ENCODE measurements at regions of chr7 and their contacts with region 1.

Region 1: DNA sequence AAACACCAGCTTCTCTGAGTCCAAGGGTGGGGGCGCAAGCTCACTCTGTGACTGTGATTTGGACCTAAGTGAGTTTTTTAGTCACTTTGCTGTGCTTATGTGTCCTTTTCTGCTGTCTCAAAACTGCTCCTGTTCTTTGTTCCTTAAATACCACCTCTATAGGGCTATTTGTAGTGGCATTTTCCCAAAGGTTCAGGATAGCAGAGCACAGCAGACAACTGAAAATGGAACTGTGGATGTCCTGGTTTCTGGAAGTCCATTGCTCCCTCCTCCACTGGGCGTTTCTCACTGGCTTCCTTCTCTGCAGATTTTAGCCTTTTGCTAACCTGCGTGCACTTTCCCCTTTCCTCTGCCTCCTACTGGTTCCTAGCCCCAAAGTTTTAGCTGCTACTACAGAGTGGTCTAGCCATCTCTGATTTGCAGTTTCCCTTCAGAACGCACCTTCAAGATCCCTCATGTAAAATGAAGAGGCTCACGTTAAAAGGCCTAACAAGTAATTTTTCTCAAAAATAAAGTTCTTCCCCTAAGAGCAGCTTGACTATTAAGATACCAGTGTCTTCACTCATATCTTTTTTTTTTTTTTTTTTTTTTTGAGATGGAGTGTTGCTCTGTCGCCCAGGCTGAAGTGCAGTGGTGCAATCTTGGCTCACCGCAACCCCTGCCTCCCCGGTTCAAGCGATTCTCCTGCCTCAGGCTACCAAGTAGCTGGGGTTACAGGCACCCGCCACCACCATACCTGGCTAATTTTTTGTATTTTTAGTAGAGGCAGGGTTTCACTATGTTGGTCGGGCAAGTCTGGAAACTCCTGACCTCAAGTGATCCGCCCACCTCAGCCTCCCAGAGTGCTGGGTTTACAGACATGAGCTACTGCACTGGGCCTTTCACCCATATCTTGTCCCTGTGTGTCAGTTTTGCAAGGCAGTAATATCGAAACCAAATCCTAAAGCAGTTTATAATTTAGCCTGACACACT is 25.8 kb downstream of the BLVRA start:
- DNase-seq: peak; percentile 82
- ATAC-seq: peak; percentile 97
- H3K4me3 ChIP-seq: peak overlapping the region; percentile 47
- H3K27ac ChIP-seq: peak overlapping the region; percentile 56
- H3K4me1 ChIP-seq: peaks cover 16% of the 10 kb centered on the region
- H3K27me3 ChIP-seq: no peaks in the 10 kb centered on the region
- CTCF ChIP-seq: no peak; a peak in 1 of 6 replicates
- EP300 ChIP-seq: no peak
- POLR2A ChIP-seq: no peak
- RAD21 ChIP-seq: no peak

Region 2: DNA sequence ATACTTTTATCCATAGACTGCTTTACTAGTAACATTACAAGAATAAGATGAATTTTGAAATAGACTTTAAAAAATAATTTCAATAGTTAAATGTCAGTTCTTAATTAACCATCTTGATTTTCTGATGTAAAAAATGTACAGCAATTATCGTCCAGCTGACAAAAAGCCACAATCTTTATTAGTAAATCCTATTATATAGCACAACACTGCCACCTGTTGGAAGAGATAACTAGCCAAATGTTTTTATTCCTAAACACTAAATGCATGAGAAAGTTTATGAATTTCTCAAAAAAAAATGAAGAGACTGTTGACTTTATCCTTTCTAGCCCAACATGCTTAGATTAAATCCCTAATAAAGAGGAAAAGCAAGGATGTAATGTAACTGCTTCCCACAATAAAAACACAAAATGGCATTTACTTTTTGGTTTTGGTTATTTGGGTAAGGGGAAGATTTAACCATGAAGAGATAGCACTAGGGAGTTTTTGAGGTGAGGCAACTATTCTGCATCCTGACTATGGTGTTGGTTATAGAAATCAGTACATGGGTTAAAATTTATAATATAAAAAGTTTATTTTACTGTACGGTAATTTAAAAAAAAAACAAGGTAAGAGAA is 63.0 kb before region 1 on chr7:
- CTCF ChIA-PET with region 1: interaction called, 11 read pairs
- POLR2A ChIA-PET with region 1: no interaction called
- RAD21 ChIA-PET with region 1: interaction called, 5 read pairs
- SMC1A ChIA-PET with region 1: interaction called, 5 read pairs
- in situ Hi-C with region 1: no loop called
- intact Hi-C with region 1: no loop called
- DNase-seq: no peak
- ATAC-seq: peak; percentile 52
- H3K4me3 ChIP-seq: no peak overlapping the region
- H3K27ac ChIP-seq: no peak overlapping the region
- H3K4me1 ChIP-seq: no peaks in the 10 kb centered on the region
- H3K27me3 ChIP-seq: no peaks in the 10 kb centered on the region
- CTCF ChIP-seq: peak; percentile 40 to 64 (median 44); a peak in 5 of 6 replicates
- EP300 ChIP-seq: no peak
- POLR2A ChIP-seq: no peak
- RAD21 ChIP-seq: peak; percentile 68

Region 3: DNA sequence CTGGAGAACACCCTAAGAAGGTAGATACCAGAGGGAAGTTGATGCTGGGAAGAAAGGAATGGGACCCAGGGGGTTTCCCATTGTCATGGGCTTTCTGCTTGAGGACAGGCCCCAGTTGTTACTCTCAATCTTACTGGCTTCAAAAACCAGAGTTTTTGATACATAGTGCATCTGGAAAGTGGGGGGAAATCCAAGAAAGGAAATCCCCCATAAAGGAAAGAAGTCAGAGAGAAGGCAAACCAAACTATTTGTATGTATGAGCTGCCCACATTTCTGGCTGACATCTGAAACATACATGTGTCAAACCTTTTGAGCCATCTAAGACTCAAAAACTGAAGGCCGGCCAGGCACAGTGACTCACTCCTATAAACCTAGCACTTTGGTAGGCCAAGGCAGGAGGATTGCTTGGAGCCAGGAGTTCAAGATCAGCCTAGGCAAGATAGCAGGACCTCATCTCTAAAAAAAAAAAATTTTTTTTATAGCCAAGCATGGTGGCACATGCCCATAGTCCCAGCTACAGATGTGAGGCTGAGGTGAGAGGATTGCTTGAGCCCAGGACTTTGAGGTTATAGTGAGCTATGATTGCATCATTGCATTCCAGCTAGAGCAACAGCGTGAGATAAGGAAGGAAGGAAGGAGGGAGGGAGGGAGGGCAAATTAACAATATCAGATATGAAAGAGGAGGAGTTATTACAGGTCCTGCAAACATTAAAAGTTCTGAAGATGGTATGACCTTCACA is 48.3 kb before region 1 on chr7:
- CTCF ChIA-PET with region 1: interaction called, 6 read pairs
- POLR2A ChIA-PET with region 1: interaction called, 7 read pairs
- RAD21 ChIA-PET with region 1: interaction called, 25 read pairs
- SMC1A ChIA-PET with region 1: interaction called, 37 read pairs
- in situ Hi-C with region 1: no loop called
- intact Hi-C with region 1: no loop called
- DNase-seq: peak; percentile 90
- ATAC-seq: peak; percentile 90
- H3K4me3 ChIP-seq: no peak overlapping the region
- H3K27ac ChIP-seq: peak overlapping the region; percentile 58
- H3K4me1 ChIP-seq: peaks cover 31% of the 10 kb centered on the region
- H3K27me3 ChIP-seq: no peaks in the 10 kb centered on the region
- CTCF ChIP-seq: no peak
- EP300 ChIP-seq: peak; percentile 67 to 81; a peak in 3 of 4 replicates
- POLR2A ChIP-seq: no peak
- RAD21 ChIP-seq: 0 out of 2 replicates have a peak, but pooled peaks have one; percentile 1

Region 4: DNA sequence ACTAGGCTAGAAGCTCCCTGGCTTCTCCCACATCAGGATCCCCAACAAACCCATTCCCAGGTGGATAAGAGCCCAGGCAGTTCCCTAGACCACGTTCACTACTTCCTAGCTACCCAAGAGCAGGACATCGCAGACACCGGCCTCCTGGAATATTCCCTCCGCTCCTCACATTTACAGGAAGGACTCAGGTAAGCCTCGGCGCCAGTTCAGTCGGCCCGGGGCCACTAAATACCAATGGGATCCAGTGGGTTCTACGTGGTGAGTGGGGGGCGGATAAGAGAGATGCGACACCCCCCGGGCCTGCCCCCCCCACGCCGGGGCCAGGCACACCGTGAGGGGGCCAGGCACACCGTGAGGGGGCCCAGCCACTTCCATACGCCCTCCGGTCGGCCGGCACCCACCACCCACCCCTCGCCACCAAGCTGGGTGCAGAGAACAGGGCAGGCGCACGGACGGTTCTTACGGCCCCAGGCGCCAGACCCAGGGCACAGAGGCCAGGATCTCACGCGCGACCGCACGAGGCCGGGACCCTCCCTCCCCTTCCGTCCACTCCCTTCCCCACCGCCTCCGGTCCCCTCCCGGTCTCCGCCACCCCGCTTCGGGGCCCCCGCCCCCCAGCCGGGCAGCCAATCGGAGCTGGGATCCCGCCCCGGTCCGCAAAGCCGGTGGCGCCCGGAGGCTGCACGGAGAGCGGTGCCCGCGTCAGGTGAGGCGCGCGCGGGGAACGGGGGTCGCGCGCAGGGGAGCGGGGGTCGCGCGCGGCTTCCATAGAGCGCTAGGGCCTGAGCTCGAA is 26.1 kb before region 1 on chr7 and contains the start of gene BLVRA:
- CTCF ChIA-PET with region 1: interaction called, 36 read pairs
- POLR2A ChIA-PET with region 1: interaction called, 8 read pairs
- RAD21 ChIA-PET with region 1: interaction called, 40 read pairs
- SMC1A ChIA-PET with region 1: interaction called, 29 read pairs
- in situ Hi-C with region 1: no loop called
- intact Hi-C with region 1: no loop called
- DNase-seq: no peak
- ATAC-seq: peak; percentile 82
- H3K4me3 ChIP-seq: peak within 1 kb of the TSS; percentile 87
- H3K27ac ChIP-seq: peak within 1 kb of the TSS; percentile 73
- H3K4me1 ChIP-seq: peaks cover 38% of the 10 kb centered on the region
- H3K27me3 ChIP-seq: no peaks in the 10 kb centered on the region
- CTCF ChIP-seq: no peak
- EP300 ChIP-seq: no peak
- POLR2A ChIP-seq: peak; percentile 70
- RAD21 ChIP-seq: no peak
- polyA plus RNA-seq, gene BLVRA: 187 to 198 TPM

Region 5: DNA sequence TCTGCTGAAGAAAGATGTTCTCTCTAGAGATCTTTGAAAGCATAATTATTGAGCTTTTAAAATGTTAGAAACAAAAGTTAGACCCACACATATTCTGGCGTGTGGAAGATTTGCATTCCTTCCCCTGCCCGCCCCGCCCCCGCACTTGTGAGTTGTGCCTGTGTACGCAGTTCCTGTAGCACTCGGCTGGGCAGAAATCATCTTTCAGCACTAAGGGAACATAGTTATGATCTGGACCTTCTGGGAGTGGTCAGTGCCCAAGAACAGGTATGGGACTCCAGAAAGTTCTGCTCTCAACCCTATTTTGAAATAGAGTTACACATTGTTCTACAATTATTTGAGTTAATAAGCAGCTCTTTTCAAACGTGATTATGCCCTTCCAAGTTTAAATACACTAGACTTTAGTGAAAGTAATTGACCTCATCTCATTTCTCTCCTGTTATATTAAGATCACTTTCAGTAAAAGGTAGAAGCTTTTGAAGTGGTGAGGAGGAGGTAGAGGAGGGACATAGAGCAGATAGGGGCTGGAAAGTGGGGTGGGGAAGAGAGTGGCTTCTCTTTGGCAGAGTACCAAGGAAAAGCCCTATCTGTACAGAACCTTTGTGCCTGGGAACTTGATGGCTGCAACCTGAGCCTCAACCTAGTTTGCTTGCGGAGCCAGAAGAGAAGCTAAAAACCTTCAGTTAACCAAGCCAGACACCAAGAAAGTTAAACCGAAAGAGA is 20.1 kb before region 1 on chr7:
- CTCF ChIA-PET with region 1: interaction called, 36 read pairs
- POLR2A ChIA-PET with region 1: interaction called, 12 read pairs
- RAD21 ChIA-PET with region 1: interaction called, 40 read pairs
- SMC1A ChIA-PET with region 1: interaction called, 29 read pairs
- in situ Hi-C with region 1: no loop called
- intact Hi-C with region 1: no loop called
- DNase-seq: no peak
- ATAC-seq: peak; percentile 86
- H3K4me3 ChIP-seq: peak overlapping the region; percentile 77
- H3K27ac ChIP-seq: peak overlapping the region; percentile 76
- H3K4me1 ChIP-seq: peaks cover 29% of the 10 kb centered on the region
- H3K27me3 ChIP-seq: no peaks in the 10 kb centered on the region
- CTCF ChIP-seq: no peak
- EP300 ChIP-seq: no peak
- POLR2A ChIP-seq: peak; percentile 29; the same call in 1 of the 2 replicates
- RAD21 ChIP-seq: no peak

Region 6: DNA sequence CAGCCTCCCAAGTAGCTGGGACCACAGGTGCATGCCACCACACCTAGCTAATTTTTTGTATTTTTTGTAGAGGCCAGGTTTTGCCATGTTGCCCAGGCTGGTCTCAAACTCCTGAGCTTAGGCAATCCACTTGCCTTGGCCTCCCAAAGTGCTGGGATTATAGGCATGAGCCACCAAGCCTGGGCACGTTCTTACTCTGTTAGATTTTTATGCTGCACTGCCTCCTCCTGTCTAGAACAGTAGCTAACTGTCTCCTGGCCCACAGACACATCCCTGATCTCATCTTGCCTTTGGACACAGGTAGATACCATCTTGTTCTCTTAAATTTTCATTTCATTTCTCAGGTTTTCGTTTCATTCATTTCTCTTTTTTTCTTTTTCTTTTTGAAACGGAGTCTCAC is 15.3 kb after region 1 on chr7:
- CTCF ChIA-PET with region 1: interaction called, 8 read pairs
- POLR2A ChIA-PET with region 1: interaction called, 3 read pairs
- RAD21 ChIA-PET with region 1: interaction called, 6 read pairs
- SMC1A ChIA-PET with region 1: interaction called, 10 read pairs
- in situ Hi-C with region 1: no loop called
- intact Hi-C with region 1: no loop called
- DNase-seq: no peak
- ATAC-seq: peak; percentile 63
- H3K4me3 ChIP-seq: no peak overlapping the region
- H3K27ac ChIP-seq: no peak overlapping the region
- H3K4me1 ChIP-seq: no peaks in the 10 kb centered on the region
- H3K27me3 ChIP-seq: no peaks in the 10 kb centered on the region
- CTCF ChIP-seq: peak; percentile 16 to 30 (median 21); a peak in 1 of 6 replicates
- EP300 ChIP-seq: no peak
- POLR2A ChIP-seq: no peak
- RAD21 ChIP-seq: peak; percentile 29; the same call in 1 of the 2 replicates

Region 7: GRCh38 chr7:44044315-44045225 is 260.3 kb after region 1 on chr7 and contains the start of gene DBNL:
- CTCF ChIA-PET with region 1: no interaction called
- POLR2A ChIA-PET with region 1: no interaction called
- RAD21 ChIA-PET with region 1: no interaction called
- SMC1A ChIA-PET with region 1: no interaction called
- in situ Hi-C with region 1: no loop called
- intact Hi-C with region 1: no loop called
- DNase-seq: peak; percentile 45
- ATAC-seq: peak; percentile 83
- H3K4me3 ChIP-seq: peak within 1 kb of the TSS; percentile 83
- H3K27ac ChIP-seq: peak within 1 kb of the TSS; percentile 88
- H3K4me1 ChIP-seq: peaks cover 15% of the 10 kb centered on the region
- H3K27me3 ChIP-seq: no peaks in the 10 kb centered on the region
- CTCF ChIP-seq: no peak
- EP300 ChIP-seq: no peak
- POLR2A ChIP-seq: peak; percentile 97
- RAD21 ChIP-seq: no peak
- polyA plus RNA-seq, gene DBNL: 4.1 to 18.5 TPM

Measured in GM12878 (cell line).